ENCODE measurements at regions of chr15 and their contacts with region 1.

Region 1: GRCh38 chr15:41022487-41023090 is 69.3 kb downstream of the CHAC1 start:
- DNase-seq: peak in 1 of 2 donors; percentile 17
- ATAC-seq: peak in 1 of 2 donors; percentile 62
- H3K4me3 ChIP-seq: no peak overlapping the region
- H3K27ac ChIP-seq: no peak overlapping the region
- H3K4me1 ChIP-seq: peaks cover 6 to 13% of the 10 kb centered on the region in 2 donors
- H3K27me3 ChIP-seq: no peaks in the 10 kb centered on the region
- CTCF ChIP-seq: peak; percentile 45 to 74 (median 60)
- POLR2A ChIP-seq: no peak

Region 2: DNA sequence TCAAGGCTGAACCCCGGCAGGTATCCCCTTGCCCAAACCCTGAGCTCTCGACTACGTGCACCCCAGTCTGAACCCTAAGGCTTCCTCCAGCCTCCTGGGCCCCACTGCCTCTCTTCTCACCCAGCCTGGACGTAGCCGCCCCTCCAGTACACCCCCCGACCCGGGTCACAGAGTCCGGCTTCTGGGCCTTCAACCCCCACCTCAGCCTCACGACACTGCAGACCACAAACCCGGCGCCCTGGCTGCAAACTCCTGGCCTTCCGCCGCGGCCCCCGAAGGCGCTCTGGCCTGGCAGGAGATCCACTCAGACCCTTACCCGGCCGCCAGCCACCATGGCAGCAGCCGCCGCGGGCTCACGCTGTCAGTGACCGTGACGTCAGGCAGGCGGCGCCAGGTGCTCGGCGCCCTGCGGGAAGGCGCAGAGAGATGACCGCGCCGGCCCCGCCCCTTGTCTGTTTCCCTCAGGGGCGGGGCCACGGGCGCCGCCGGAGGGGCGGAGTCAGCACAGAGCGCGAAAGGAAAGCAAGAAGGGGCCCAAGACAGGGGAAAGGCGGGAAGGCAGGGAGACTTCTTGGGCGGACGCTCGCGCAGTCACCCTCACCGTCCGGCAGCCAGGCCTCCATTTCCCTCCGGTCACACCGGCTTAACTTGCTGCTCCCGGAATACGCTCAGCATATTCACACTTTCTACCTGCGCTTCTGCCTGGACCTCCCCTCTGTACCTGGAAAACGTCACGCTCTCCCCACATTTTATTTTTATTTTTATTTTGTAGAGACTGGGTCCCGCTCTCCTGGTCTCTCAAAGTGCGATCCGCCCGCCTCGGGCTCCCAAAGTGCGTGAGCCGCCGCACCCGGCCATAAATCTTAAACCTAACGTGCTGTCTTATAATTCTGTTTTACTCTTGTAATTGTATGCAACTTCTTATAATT is 267.4 kb before region 1 on chr15 and contains the start of gene RMDN3:
- in situ Hi-C with region 1: no loop called
- intact Hi-C with region 1: loop called (anchors 10 kb)
- DNase-seq: peak; percentile 78 to 88
- ATAC-seq: peak; percentile 90 to 93
- H3K4me3 ChIP-seq: peak within 1 kb of the TSS; percentile 90 to 100 (median 96)
- H3K27ac ChIP-seq: peak within 1 kb of the TSS; percentile 92 to 97 (median 95)
- H3K4me1 ChIP-seq: peaks cover 13 to 15% of the 10 kb centered on the region in 2 donors
- H3K27me3 ChIP-seq: no peaks in the 10 kb centered on the region
- CTCF ChIP-seq: no peak
- POLR2A ChIP-seq: peak; percentile 78 to 80
- total RNA-seq, gene RMDN3: 12.7 to 55.3 (median 19.6) TPM

Region 3: GRCh38 chr15:40941528-40942336 is 80.9 kb before region 1 on chr15:
- in situ Hi-C with region 1: loop called in 1 of 4 experiments (anchors 10 kb)
- intact Hi-C with region 1: loop called (anchors 2 kb)
- DNase-seq: peak; percentile 41 to 56
- ATAC-seq: peak; percentile 62 to 68
- H3K4me3 ChIP-seq: peak overlapping the region; percentile 57 to 81 (median 68)
- H3K27ac ChIP-seq: peak overlapping the region; percentile 76 to 85 (median 82)
- H3K4me1 ChIP-seq: peaks cover 25 to 47% of the 10 kb centered on the region in 2 donors
- H3K27me3 ChIP-seq: peaks cover 0 to 4% (median 0%) of the 10 kb centered on the region in 3 donors
- CTCF ChIP-seq: peak in 4 of 5 experiments; percentile 94 to 97 (median 95)
- POLR2A ChIP-seq: peak; percentile 51 to 53

Region 4: GRCh38 chr15:41180206-41180789 is 157.7 kb after region 1 on chr15:
- in situ Hi-C with region 1: no loop called
- intact Hi-C with region 1: loop called (anchors 5 kb)
- DNase-seq: no peak
- ATAC-seq: no peak
- H3K4me3 ChIP-seq: no peak overlapping the region
- H3K27ac ChIP-seq: no peak overlapping the region
- H3K4me1 ChIP-seq: no peaks in the 10 kb centered on the region
- H3K27me3 ChIP-seq: no peaks in the 10 kb centered on the region
- CTCF ChIP-seq: no peak
- POLR2A ChIP-seq: no peak

Region 5: DNA sequence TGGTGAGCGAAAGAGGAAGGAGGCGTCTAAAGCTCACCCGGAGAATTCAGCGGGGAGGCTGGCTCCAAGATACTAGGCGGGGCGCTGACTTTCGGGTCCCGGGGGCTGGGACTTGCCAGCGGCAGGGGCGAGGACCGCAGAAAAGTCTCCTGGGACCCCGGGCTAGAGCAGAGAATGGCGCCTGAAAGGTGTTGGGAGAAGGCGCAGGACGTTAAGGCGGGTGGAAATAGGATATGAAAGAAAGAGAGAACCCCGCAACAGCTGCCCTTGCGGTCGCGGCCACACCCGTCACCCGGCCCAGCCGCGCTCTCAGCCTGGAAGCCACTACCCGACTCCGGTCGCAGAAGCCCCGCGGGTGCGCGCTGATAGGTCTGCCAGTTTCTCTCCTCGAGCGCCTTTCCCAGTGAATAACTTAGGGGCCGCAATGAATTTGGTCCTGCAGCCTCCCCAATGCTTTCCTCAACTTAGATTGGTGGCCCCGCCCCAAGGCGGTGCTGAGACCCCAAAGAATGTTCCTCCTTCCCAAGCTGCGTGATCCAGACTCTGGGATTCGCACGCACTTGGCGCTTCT is 490.4 kb after region 1 on chr15:
- in situ Hi-C with region 1: no loop called
- intact Hi-C with region 1: no loop called
- DNase-seq: no peak
- ATAC-seq: peak; percentile 55 to 58
- H3K4me3 ChIP-seq: peak overlapping the region; percentile 36 to 53 (median 45)
- H3K27ac ChIP-seq: no peak overlapping the region
- H3K4me1 ChIP-seq: peaks cover 20 to 27% of the 10 kb centered on the region in 2 donors
- H3K27me3 ChIP-seq: peaks cover 31 to 34% (median 32%) of the 10 kb centered on the region in 3 donors
- CTCF ChIP-seq: no peak
- POLR2A ChIP-seq: no peak

Measured in gastrocnemius medialis (tissue), 4 donors.